CD8-positive, alpha-beta T cell (primary cell): ENCODE measurements at regions of chr1 and their contacts with region 1.

Region 1: GRCh38 chr1:92461364-92462097 is 25.2 kb downstream of the GFI1 start:
- DNase-seq: peak in 2 of 9 experiments; percentile 38 to 57
- ATAC-seq: no peak
- H3K4me3 ChIP-seq: no peak overlapping the region
- H3K4me3 Mint-ChIP-seq: no peak overlapping the region
- H3K27ac ChIP-seq: no peak overlapping the region
- H3K27ac Mint-ChIP-seq: no peak overlapping the region
- H3K4me1 ChIP-seq: peaks cover 19% of the 10 kb centered on the region
- H3K4me1 Mint-ChIP-seq: peaks cover 45% of the 10 kb centered on the region
- H3K27me3 ChIP-seq: no peaks in the 10 kb centered on the region
- H3K27me3 Mint-ChIP-seq: no peaks in the 10 kb centered on the region
- CTCF ChIP-seq: no peak

Region 2: DNA sequence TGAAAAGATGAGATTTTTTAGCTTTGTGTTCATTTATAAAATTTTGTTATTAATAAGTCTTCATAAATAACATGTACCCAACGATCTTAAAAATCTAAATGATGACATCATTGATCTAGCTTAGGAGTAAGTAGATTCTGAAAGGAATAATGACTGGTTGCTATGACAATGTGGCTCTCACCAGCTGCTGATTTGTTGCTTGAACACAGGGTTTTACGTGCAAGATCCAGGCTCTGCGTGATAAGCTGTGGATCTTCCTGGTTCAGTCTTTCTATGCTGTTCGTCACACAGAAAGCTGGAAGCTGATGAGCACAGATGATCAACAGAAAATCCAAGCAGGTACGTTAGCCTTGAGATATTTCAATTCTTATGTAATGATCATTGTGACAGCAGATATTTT is 292.9 kb before region 1 on chr1:
- CTCF ChIA-PET with region 1: no interaction called
- POLR2A ChIA-PET with region 1: no interaction called
- intact Hi-C with region 1: no loop called
- DNase-seq: no peak
- ATAC-seq: no peak
- H3K4me3 ChIP-seq: no peak overlapping the region
- H3K4me3 Mint-ChIP-seq: no peak overlapping the region
- H3K27ac ChIP-seq: no peak overlapping the region
- H3K27ac Mint-ChIP-seq: no peak overlapping the region
- H3K4me1 ChIP-seq: no peaks in the 10 kb centered on the region
- H3K4me1 Mint-ChIP-seq: no peaks in the 10 kb centered on the region
- H3K27me3 ChIP-seq: no peaks in the 10 kb centered on the region
- H3K27me3 Mint-ChIP-seq: no peaks in the 10 kb centered on the region
- CTCF ChIP-seq: no peak

Region 3: DNA sequence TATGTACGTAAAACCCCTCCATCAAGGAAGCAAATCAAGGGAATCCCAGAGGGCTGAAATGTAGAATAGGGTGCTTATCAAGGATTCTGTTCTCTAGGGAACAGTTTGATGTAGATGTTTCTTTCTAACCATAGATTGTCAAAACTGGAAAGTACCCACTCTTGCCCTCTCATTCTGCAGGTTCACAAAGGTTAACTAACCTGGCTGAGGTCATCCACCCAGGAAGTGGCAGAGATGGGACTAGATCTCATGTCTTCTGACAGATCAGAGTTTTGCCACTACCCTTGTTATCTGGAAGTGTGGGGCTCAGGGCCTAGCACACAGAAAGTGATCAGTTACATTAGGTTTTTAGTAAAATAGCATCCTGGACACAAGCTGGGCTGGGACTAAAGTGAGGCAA is 22.2 kb before region 1 on chr1:
- CTCF ChIA-PET with region 1: no interaction called
- POLR2A ChIA-PET with region 1: no interaction called
- intact Hi-C with region 1: no loop called
- DNase-seq: no peak
- ATAC-seq: no peak
- H3K4me3 ChIP-seq: no peak overlapping the region
- H3K4me3 Mint-ChIP-seq: no peak overlapping the region
- H3K27ac ChIP-seq: no peak overlapping the region
- H3K27ac Mint-ChIP-seq: no peak overlapping the region
- H3K4me1 ChIP-seq: no peaks in the 10 kb centered on the region
- H3K4me1 Mint-ChIP-seq: peaks cover 1% of the 10 kb centered on the region
- H3K27me3 ChIP-seq: no peaks in the 10 kb centered on the region
- H3K27me3 Mint-ChIP-seq: no peaks in the 10 kb centered on the region
- CTCF ChIP-seq: no peak

Region 4: DNA sequence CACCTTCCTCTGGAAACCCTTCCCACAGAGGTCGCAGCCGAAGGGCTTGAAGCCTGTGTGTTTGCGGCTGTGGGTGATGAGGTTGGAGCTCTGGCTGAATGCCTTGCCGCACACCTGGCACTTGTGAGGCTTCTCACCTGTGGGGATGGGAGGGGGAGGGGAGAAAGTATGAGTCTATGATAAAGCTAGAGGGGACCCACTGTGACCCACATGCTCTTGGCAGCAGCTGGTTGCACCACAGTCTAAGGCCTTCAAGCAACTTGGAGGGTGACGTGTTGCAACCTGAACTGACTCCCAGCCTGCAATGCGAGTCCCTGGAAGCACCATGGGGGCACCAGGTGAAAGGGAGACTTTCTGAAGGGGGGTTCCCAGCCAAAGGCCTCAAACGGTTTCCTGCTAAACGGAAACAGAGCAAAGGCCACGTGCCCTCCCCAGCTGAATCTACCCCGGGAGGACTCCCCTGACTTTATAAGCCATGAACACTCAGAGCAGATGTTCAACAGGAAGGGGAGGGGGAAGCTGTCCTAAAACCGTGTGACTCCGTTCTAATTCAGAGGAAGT is 14.6 kb after region 1 on chr1:
- CTCF ChIA-PET with region 1: interaction called, 3 read pairs
- POLR2A ChIA-PET with region 1: interaction called, 13 read pairs
- intact Hi-C with region 1: no loop called
- DNase-seq: peak; percentile 15 to 93 (median 64)
- ATAC-seq: peak; percentile 90
- H3K4me3 ChIP-seq: no peak overlapping the region
- H3K4me3 Mint-ChIP-seq: peak overlapping the region; percentile 26
- H3K27ac ChIP-seq: peak overlapping the region in 1 of 2 experiments; percentile 70
- H3K27ac Mint-ChIP-seq: peak overlapping the region; percentile 81
- H3K4me1 ChIP-seq: peaks cover 41% of the 10 kb centered on the region
- H3K4me1 Mint-ChIP-seq: peaks cover 64% of the 10 kb centered on the region
- H3K27me3 ChIP-seq: no peaks in the 10 kb centered on the region
- H3K27me3 Mint-ChIP-seq: no peaks in the 10 kb centered on the region
- CTCF ChIP-seq: no peak

Region 5: DNA sequence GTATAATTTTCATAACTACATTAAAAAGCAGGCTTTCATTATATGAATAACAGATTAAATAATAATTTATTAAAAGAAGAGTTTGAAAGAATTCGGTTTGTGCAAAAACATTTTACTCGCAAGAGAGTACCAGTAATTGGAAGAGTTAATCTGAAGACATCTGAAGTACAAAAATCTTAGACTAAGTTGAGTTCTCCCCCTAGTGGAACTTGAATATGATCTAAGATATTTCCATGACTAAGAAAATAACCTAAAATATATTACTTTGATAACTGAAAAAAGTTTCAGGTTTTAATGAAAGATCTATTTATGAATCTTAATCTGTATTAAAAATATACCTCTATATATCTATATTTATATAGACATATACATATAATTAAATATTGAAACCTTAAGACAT is 137.7 kb after region 1 on chr1:
- CTCF ChIA-PET with region 1: interaction called, 4 read pairs
- POLR2A ChIA-PET with region 1: no interaction called
- intact Hi-C with region 1: loop called (anchors 2 to 5 kb)
- DNase-seq: peak in 2 of 9 experiments; percentile 55 to 70
- ATAC-seq: peak; percentile 59
- H3K4me3 ChIP-seq: no peak overlapping the region
- H3K4me3 Mint-ChIP-seq: no peak overlapping the region
- H3K27ac ChIP-seq: no peak overlapping the region
- H3K27ac Mint-ChIP-seq: no peak overlapping the region
- H3K4me1 ChIP-seq: no peaks in the 10 kb centered on the region
- H3K4me1 Mint-ChIP-seq: peaks cover 2% of the 10 kb centered on the region
- H3K27me3 ChIP-seq: no peaks in the 10 kb centered on the region
- H3K27me3 Mint-ChIP-seq: no peaks in the 10 kb centered on the region
- CTCF ChIP-seq: peak; percentile 91

Region 6: DNA sequence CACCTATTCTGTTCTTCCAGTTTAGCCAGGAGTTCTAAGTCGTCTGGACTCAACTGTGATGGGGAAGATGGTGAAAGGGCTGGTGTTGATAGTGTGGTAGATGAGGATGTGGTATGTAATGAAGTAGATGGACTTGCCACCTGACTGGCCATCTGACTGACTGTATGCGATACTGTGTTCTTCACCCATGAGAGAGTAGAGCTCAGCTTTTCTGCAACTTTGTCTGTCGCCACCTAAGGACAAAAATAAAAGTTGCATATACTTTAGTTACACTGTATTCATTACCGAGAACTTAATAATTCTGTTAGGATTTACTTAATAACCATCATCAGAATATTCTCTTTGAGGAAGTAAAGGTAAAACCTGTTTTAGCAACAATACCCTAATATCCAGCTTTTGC is 274.9 kb after region 1 on chr1:
- CTCF ChIA-PET with region 1: no interaction called
- POLR2A ChIA-PET with region 1: no interaction called
- intact Hi-C with region 1: no loop called
- DNase-seq: no peak
- ATAC-seq: no peak
- H3K4me3 ChIP-seq: no peak overlapping the region
- H3K4me3 Mint-ChIP-seq: no peak overlapping the region
- H3K27ac ChIP-seq: no peak overlapping the region
- H3K27ac Mint-ChIP-seq: no peak overlapping the region
- H3K4me1 ChIP-seq: no peaks in the 10 kb centered on the region
- H3K4me1 Mint-ChIP-seq: no peaks in the 10 kb centered on the region
- H3K27me3 ChIP-seq: no peaks in the 10 kb centered on the region
- H3K27me3 Mint-ChIP-seq: peaks cover 2% of the 10 kb centered on the region
- CTCF ChIP-seq: no peak